ENCODE measurements at regions of chr3 and their contacts with region 1.

Region 1: GRCh38 chr3:42247576-42248027 is 18.4 kb downstream of the CCK start:
- DNase-seq: no peak
- ATAC-seq: peak; percentile 72 to 78
- H3K4me3 ChIP-seq: no peak overlapping the region
- H3K27ac ChIP-seq: no peak overlapping the region
- H3K4me1 ChIP-seq: no peaks in the 10 kb centered on the region
- H3K27me3 ChIP-seq: peaks cover 6% of the 10 kb centered on the region
- CTCF ChIP-seq: peak; percentile 77

Region 2: GRCh38 chr3:42101048-42101447 is 146.6 kb before region 1 on chr3:
- intact Hi-C with region 1: no loop called
- DNase-seq: peak; percentile 67
- ATAC-seq: peak; percentile 74 to 86
- H3K4me3 ChIP-seq: no peak overlapping the region
- H3K27ac ChIP-seq: peak overlapping the region; percentile 58
- H3K4me1 ChIP-seq: peaks cover 57% of the 10 kb centered on the region
- H3K27me3 ChIP-seq: no peaks in the 10 kb centered on the region
- CTCF ChIP-seq: no peak

Region 3: GRCh38 chr3:42403737-42404136 is 156.1 kb after region 1 on chr3:
- intact Hi-C with region 1: no loop called
- DNase-seq: no peak
- ATAC-seq: no peak
- H3K4me3 ChIP-seq: no peak overlapping the region
- H3K27ac ChIP-seq: no peak overlapping the region
- H3K4me1 ChIP-seq: no peaks in the 10 kb centered on the region
- H3K27me3 ChIP-seq: no peaks in the 10 kb centered on the region
- CTCF ChIP-seq: no peak

Region 4: GRCh38 chr3:42443819-42444436 is 196.3 kb after region 1 on chr3:
- intact Hi-C with region 1: loop called (anchors 5 kb)
- DNase-seq: peak; percentile 84
- ATAC-seq: peak; percentile 93 to 94
- H3K4me3 ChIP-seq: no peak overlapping the region
- H3K27ac ChIP-seq: no peak overlapping the region
- H3K4me1 ChIP-seq: peaks cover 10% of the 10 kb centered on the region
- H3K27me3 ChIP-seq: peaks cover 14% of the 10 kb centered on the region
- CTCF ChIP-seq: peak; percentile 97

Region 5: DNA sequence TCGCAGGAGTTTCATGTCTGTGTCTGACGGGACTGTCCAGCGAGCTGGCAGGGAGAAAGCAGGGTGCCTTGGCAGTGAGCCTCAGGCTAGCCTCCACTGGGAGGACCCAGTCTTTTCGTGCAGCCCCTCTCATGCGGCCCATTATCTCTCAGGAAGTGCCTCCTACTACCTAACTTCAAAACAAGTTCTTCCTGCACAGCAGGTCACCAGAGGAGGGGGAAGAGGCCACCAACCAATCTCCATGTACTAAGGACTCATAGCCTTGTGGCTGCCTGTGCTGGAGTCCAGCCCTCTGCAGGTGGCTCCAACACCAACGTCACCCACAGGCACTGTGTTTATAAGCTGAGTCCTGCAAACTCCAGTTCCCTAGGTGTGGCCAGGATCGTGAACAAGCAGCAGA is 259.6 kb after region 1 on chr3:
- intact Hi-C with region 1: no loop called
- DNase-seq: peak; percentile 59
- ATAC-seq: peak; percentile 38 to 51
- H3K4me3 ChIP-seq: peak overlapping the region; percentile 15
- H3K27ac ChIP-seq: peak overlapping the region; percentile 64
- H3K4me1 ChIP-seq: peaks cover 59% of the 10 kb centered on the region
- H3K27me3 ChIP-seq: peaks cover 4% of the 10 kb centered on the region
- CTCF ChIP-seq: no peak